ENCODE measurements at regions of chr12 and their contacts with region 1.

Region 1: DNA sequence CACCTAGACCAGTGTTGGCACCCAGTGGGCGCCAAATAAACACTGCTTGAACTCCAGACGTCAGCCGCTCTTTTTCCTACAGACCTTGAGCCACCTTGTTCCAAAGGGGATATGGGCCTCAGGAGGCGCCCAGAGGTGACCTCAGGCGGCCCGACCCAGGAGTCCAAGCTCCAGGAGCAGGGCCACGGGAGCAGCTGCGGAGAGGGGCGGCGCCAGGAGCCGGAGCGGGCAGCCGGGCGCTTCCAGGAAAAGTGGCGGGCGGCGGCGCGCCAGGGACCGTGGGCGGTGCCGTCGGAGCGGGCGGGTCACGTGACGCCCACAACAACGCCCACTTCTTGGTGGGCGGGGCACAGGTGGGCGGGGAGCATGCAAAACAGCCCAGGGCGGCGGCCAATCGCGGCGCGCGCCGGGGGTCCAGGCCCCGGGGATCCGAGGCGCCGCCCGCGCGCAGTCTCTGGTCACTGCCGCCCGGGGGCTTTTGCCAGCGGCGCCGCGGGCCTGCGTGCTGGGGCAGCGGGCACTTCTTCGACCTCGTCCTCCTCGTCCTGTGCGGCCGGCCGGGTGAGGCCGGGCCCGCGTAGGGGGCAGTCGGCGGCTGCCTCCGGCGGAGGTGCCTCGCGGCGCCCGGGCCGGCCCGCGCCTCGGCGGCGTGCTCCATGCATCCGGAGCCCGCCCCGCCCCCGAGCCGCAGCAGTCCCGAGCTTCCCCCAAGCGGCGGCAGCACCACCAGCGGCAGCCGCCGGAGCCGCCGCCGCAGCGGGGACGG is at the start of gene ORAI1:
- DNase-seq: peak; percentile 99
- H3K4me3 ChIP-seq: peak within 1 kb of the TSS; percentile 77 to 98 (median 86)
- H3K27ac ChIP-seq: peak within 1 kb of the TSS; percentile 95 to 99 (median 98)
- H3K4me1 ChIP-seq: peaks cover 43 to 63% (median 55%) of the 10 kb centered on the region in 6 donors
- H3K27me3 ChIP-seq: no peaks in the 10 kb centered on the region
- CTCF ChIP-seq: peak in 5 of 11 experiments; percentile 17 to 47 (median 45)
- POLR2A ChIP-seq: peak in 2 of 3 donors; percentile 37 to 71
- total RNA-seq, gene ORAI1: 27.7 to 47.5 (median 36.6) TPM

Region 2: DNA sequence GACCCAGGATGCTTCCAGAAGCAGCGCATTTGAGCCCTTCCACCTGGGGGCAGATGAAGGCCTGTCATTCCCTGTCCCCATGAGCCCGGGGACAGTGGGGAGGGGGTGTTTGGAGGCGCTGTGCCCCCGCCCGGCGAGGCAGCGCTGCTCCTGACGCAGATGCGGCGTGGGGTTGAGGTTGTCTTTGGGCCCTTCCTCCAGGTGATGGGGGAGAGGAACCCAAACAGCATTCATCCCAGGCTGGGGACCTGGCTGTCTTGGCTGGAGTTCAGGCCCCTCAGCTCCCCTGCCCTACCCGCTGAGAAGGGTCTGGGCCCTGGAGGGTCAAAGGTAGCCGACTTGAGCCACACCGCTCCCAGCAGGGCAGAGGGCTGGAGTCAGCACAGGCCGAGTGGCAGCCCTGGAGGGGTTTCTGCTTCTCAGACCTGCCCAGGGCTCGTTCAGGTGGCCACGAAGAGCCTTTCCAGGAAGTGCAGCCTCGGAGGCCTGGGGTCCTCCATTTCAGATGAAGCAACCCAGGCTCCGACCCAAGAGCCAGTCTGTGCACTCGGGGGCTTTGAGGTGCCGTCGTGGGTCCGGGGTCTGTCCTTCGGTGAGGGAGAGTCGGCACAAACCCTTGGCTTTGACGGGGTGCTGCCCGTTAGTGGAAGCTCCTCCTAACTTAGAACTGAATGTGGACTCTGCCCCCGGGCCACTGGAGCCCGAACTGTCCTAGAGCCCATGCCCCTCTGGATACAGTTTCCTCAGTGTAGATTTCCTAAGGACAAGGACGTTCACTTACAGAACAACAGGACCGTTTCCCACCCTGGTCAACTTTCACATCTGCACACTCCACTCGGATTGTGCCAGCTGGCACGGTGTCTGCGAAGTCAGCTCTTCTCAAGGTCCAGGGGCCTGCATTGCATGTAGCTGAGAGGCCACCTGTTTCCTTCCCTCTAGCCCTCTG is 884.5 kb before region 1 on chr12:
- intact Hi-C with region 1: no loop called
- DNase-seq: peak; percentile 83
- H3K4me3 ChIP-seq: peak overlapping the region in 3 of 8 donors; percentile 18 to 56 (median 20)
- H3K27ac ChIP-seq: peak overlapping the region; percentile 48 to 89 (median 78)
- H3K4me1 ChIP-seq: peaks cover 0 to 45% (median 7%) of the 10 kb centered on the region in 6 donors
- H3K27me3 ChIP-seq: no peaks in the 10 kb centered on the region
- CTCF ChIP-seq: no peak
- POLR2A ChIP-seq: peak in 1 of 3 donors; percentile 34

Region 3: DNA sequence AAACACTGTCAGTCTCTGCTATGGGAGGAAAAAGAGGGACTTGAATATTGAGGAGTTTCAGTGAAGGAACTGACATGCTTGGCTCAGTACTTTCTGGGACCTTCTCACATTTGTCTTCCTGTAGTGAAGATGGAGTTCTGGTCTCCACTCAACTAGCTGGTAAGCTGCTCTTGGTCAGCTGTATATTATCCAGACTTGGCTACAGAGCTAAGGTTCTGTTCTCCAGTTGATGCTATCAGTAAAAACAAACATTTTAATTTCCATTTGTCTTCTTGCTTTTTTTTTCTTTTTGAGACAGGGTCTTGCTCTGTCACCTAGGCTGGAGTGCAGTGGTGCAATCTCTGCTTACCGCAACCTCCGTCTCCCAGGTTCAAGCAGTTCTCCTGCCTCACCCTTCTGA is 221.1 kb before region 1 on chr12:
- intact Hi-C with region 1: no loop called
- DNase-seq: no peak
- H3K4me3 ChIP-seq: no peak overlapping the region
- H3K27ac ChIP-seq: no peak overlapping the region
- H3K4me1 ChIP-seq: peaks cover 15 to 49% (median 25%) of the 10 kb centered on the region in 6 donors
- H3K27me3 ChIP-seq: no peaks in the 10 kb centered on the region
- CTCF ChIP-seq: no peak
- POLR2A ChIP-seq: no peak

Region 4: GRCh38 chr12:121499929-121500793 is 126.1 kb before region 1 on chr12:
- intact Hi-C with region 1: loop called (anchors 10 kb)
- DNase-seq: peak; percentile 94
- H3K4me3 ChIP-seq: no peak overlapping the region
- H3K27ac ChIP-seq: peak overlapping the region in 1 of 8 donors; percentile 35
- H3K4me1 ChIP-seq: peaks cover 3 to 34% (median 17%) of the 10 kb centered on the region in 6 donors
- H3K27me3 ChIP-seq: no peaks in the 10 kb centered on the region
- CTCF ChIP-seq: peak; percentile 69 to 99 (median 95)
- POLR2A ChIP-seq: no peak

Measured in spleen (tissue), 13 donors.